A549 (cell line): ENCODE measurements at regions of chr18 and their contacts with region 1.

Region 1: GRCh38 chr18:50356036-50356945 is 18.6 kb upstream of the SKA1 start:
- DNase-seq: no peak
- ATAC-seq: peak; percentile 66 to 73; a peak in 5 of 6 replicates
- H3K4me3 ChIP-seq: no peak overlapping the region
- H3K27ac ChIP-seq: no peak overlapping the region
- H3K4me1 ChIP-seq: no peaks in the 10 kb centered on the region
- CTCF ChIP-seq: no peak
- EP300 ChIP-seq: no peak
- POLR2A ChIP-seq: no peak
- RAD21 ChIP-seq: no peak

Region 2: DNA sequence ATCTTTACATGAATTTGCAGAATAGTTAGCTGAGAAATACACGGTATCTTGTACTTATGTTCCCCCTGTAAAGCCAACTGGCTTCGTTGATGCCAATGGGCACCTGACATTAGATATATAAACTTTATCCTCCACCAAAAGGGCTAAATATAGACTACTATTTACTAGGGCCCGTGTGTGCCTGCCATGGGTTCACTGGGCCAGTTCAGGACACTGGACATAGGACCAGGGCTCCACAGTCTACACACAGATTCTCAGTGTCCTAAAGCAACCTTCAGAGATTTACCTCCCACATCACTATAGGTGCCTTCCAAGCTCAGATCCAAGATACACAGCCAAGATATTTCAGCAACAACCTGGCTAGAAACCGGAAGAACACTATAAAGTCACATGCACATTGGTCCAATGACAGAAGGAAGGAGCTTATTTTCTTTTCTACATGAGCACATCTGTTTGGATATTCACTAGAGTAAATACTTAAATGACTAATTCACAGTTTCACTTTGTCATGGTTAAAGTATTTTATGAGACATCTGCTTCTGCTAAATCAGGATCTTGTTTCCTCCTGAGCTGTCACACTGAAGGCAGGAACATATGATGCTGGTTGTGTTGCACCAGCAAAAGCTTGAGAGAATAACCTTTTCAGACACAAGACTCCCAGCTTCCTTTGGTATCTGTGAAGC is 256.4 kb before region 1 on chr18:
- CTCF ChIA-PET with region 1: no interaction called
- POLR2A ChIA-PET with region 1: no interaction called
- DNase-seq: no peak
- ATAC-seq: no peak
- H3K4me3 ChIP-seq: no peak overlapping the region
- H3K27ac ChIP-seq: no peak overlapping the region
- H3K4me1 ChIP-seq: no peaks in the 10 kb centered on the region
- CTCF ChIP-seq: no peak
- EP300 ChIP-seq: no peak
- POLR2A ChIP-seq: no peak
- RAD21 ChIP-seq: no peak

Region 3: DNA sequence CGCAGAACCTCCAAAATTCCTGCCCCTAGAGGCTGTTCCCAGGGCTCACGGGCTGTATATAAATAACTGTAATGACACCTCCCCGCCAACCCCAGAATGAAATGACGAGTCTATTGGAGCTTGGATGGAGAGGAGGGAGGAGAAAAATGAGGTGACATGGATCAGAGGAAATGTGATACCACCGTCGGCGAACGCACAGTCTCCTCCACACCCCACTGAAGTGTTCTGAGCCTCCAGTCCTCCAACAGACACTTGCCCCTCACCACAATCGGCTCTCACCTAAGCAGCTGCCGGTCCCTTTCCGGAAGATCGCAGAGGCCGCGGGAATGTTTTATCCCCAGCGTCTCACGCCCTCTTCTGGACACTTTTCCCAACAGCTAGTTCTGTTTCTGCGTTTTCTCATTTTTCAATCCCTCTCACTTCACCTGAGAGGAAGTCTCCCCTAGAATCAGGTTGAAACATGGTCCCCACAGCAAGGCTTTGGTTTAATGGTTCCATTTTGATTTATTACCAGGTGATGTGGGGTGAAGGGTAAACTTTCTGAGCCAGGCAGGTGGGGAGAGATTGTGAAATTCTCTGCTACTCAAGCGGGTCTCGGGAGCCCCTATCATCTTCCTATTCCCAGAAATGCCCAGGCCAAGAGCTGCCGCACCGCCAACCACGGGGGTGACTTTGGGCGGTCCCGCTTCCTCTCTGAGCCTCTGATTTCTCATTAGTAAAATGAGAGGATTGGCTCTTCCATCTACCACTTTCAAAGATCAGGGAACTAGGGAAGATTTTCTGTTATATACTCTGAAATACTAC is 152.3 kb before region 1 on chr18:
- CTCF ChIA-PET with region 1: interaction called, 16 read pairs
- POLR2A ChIA-PET with region 1: no interaction called
- DNase-seq: peak; percentile 24 to 28
- ATAC-seq: peak; percentile 59 to 76; a peak in 4 of 6 replicates
- H3K4me3 ChIP-seq: no peak overlapping the region
- H3K27ac ChIP-seq: no peak overlapping the region
- H3K4me1 ChIP-seq: no peaks in the 10 kb centered on the region
- CTCF ChIP-seq: peak; percentile 51
- EP300 ChIP-seq: no peak
- POLR2A ChIP-seq: no peak
- RAD21 ChIP-seq: peak; percentile 46 to 56; a peak in 4 of 5 replicates

Region 4: GRCh38 chr18:50218432-50219197 is 137.7 kb before region 1 on chr18:
- CTCF ChIA-PET with region 1: interaction called, 69 read pairs
- POLR2A ChIA-PET with region 1: no interaction called
- DNase-seq: peak in 1 of 2 experiments; percentile 40
- ATAC-seq: peak; percentile 81 to 87; a peak in 5 of 6 replicates
- H3K4me3 ChIP-seq: no peak overlapping the region
- H3K27ac ChIP-seq: no peak overlapping the region
- H3K4me1 ChIP-seq: no peaks in the 10 kb centered on the region
- CTCF ChIP-seq: peak; percentile 50
- EP300 ChIP-seq: no peak
- POLR2A ChIP-seq: no peak
- RAD21 ChIP-seq: peak; percentile 43 to 44; a peak in 4 of 5 replicates

Region 5: GRCh38 chr18:50340078-50340477 is 16.2 kb before region 1 on chr18:
- CTCF ChIA-PET with region 1: interaction called, 11 read pairs
- POLR2A ChIA-PET with region 1: no interaction called
- DNase-seq: no peak
- ATAC-seq: no peak
- H3K4me3 ChIP-seq: no peak overlapping the region
- H3K27ac ChIP-seq: no peak overlapping the region
- H3K4me1 ChIP-seq: no peaks in the 10 kb centered on the region
- CTCF ChIP-seq: no peak
- EP300 ChIP-seq: no peak
- POLR2A ChIP-seq: no peak
- RAD21 ChIP-seq: no peak